H1 (cell line): ENCODE measurements at regions of chr9 and their contacts with region 1.

Region 1: DNA sequence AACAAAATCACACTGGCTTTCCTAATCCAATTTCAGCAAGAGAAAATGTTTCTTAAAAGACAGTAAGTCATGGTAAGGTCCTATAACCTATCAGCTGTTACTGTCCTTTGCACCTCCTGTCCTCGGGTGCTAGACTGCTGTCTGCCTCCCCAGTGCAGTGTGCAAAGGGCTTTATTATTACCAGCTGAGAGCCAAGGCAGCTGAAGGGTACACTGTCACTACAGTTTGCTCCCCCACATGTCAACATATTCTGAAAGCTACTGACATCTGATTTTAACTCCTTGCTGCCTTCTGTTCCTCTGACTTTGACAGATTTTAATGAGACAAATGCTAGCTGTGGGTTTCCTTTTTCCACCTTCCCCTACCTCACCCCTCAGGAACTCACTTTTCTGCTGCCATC is 389.4 kb upstream of the SLC24A2 start:
- DNase-seq: no peak
- H3K4me3 ChIP-seq: no peak overlapping the region
- H3K27ac ChIP-seq: no peak overlapping the region
- H3K4me1 ChIP-seq: no peaks in the 10 kb centered on the region
- H3K27me3 ChIP-seq: no peaks in the 10 kb centered on the region; a peak in 1 of 7 replicates
- CTCF ChIP-seq: no peak
- EP300 ChIP-seq: no peak
- POLR2A ChIP-seq: no peak
- RAD21 ChIP-seq: no peak

Region 2: GRCh38 chr9:20191228-20191840 is 13.1 kb after region 1 on chr9:
- CTCF ChIA-PET with region 1: interaction called, 11 read pairs
- POLR2A ChIA-PET with region 1: no interaction called
- DNase-seq: no peak
- H3K4me3 ChIP-seq: no peak overlapping the region
- H3K27ac ChIP-seq: no peak overlapping the region
- H3K4me1 ChIP-seq: peaks cover 0 to 10% (median 0%) of the 10 kb centered on the region in 4 experiments; a peak in 3 of 7 replicates
- H3K27me3 ChIP-seq: no peaks in the 10 kb centered on the region
- CTCF ChIP-seq: peak in 2 of 3 experiments; percentile 2 to 18; a peak in 2 of 4 replicates
- EP300 ChIP-seq: no peak
- POLR2A ChIP-seq: no peak
- RAD21 ChIP-seq: peak in 1 of 2 experiments; percentile 9; a peak in 1 of 4 replicates